AG04450 (cell line): ENCODE measurements at regions of chr9 and their contacts with region 1.

Region 1: DNA sequence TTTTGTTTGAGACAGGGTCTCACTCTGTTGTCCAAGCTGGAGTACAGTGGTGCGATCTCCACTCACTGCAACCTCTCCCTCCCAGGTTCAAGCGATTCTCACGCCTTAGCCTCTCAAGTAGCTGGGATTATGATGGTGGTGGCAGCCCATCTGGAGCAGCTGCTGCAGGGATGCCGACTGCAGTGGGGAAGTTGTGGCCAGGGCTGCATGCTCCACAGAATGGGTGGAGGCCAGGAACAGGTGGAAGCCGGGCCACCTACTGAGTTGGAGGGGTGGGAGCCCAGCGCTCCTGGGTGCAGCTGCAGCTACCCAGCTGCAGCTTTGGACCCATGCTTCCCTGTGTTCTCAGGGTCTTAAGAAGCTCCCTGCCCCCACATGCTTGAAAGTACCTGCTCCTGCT is 99.7 kb downstream of the SCAI start:
- DNase-seq: no peak
- H3K4me3 ChIP-seq: no peak overlapping the region
- H3K27ac ChIP-seq: no peak overlapping the region
- H3K27me3 ChIP-seq: no peaks in the 10 kb centered on the region
- CTCF ChIP-seq: no peak

Region 2: GRCh38 chr9:124658165-124659017 is 385.2 kb before region 1 on chr9:
- CTCF ChIA-PET with region 1: no interaction called
- POLR2A ChIA-PET with region 1: no interaction called
- DNase-seq: peak; percentile 93
- H3K4me3 ChIP-seq: peak overlapping the region; percentile 71
- H3K27ac ChIP-seq: peak overlapping the region; percentile 93
- H3K27me3 ChIP-seq: no peaks in the 10 kb centered on the region
- CTCF ChIP-seq: no peak

Region 3: DNA sequence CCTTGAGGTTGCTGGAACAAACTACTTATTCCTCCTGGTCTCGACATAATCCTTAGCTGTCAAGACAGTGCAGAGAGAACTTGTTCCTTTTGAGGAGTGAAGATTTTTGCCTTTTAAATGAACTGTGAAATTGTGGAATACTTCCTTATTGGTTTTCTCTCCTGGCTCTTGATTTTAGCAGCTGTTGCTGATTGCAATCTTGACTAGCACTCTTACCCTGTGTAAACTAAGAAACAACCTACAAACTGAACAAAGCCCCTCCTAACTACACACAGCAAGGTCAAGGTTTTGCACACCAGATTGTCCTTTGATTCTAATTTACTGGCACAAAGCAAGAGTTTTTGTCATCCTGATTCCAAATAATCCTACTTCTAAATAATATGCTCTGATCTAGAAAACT is 18.7 kb before region 1 on chr9:
- CTCF ChIA-PET with region 1: no interaction called
- POLR2A ChIA-PET with region 1: no interaction called
- DNase-seq: no peak
- H3K4me3 ChIP-seq: no peak overlapping the region
- H3K27ac ChIP-seq: no peak overlapping the region
- H3K27me3 ChIP-seq: no peaks in the 10 kb centered on the region
- CTCF ChIP-seq: no peak

Region 4: DNA sequence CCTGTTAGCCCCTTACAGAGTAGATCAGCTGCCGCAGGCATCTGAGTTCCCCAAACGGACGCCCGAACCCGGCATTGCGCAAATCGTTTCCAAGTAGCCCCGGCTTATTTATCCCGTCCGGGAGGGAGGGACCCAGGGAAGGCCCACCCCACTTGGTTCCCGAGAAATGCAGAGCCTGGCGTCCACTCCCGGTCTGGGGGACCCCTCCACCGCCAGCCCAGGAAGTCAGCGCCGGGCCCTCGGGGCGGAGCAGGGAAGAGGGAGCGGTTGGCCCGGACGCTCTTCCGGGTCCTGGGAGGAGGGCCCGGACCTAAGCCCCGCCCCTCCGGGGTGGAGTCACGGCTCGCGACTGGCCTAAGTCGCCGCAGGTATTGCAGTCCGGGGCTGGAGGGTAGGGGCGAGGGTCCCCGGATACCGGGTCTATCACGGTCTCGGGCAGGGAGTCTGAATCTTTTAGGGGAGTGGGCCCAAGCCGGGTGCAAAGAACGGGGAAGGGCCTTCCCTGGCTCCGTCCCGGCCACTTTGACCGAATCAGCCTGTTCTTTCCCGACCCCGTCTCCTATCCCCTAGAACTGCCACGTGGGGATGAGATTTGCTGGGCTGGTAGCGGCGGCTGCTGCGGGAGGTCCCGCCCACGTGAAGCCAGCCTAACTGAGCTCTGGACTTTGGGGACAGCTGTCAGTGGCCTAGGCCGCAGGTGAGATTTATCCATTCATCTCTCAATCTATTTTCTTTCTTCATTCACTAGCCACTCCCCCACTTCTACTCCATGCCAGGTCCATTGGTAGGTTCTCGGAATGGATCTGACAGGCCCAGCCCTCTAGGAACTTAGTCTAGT is 156.8 kb after region 1 on chr9 and contains the start of gene RABEPK:
- CTCF ChIA-PET with region 1: no interaction called
- POLR2A ChIA-PET with region 1: interaction called, 10 read pairs
- DNase-seq: peak; percentile 90
- H3K4me3 ChIP-seq: peak within 1 kb of the TSS; percentile 85
- H3K27ac ChIP-seq: peak within 1 kb of the TSS; percentile 90
- H3K27me3 ChIP-seq: no peaks in the 10 kb centered on the region
- CTCF ChIP-seq: no peak
- polyA plus RNA-seq, gene RABEPK: 45.5 and 45.8 TPM in 2 replicates